ENCODE measurements at regions of chr4 and their contacts with region 1.

Region 1: GRCh38 chr4:118968005-118968404 is 79.4 kb downstream of the SYNPO2 start:
- DNase-seq: peak; percentile 43 to 74 (median 61)
- H3K4me3 ChIP-seq: no peak overlapping the region
- H3K27ac ChIP-seq: peak overlapping the region in 1 of 2 donors; percentile 65
- H3K4me1 ChIP-seq: peaks cover 29% of the 10 kb centered on the region
- H3K27me3 ChIP-seq: no peaks in the 10 kb centered on the region
- CTCF ChIP-seq: no peak
- EP300 ChIP-seq: no peak
- POLR2A ChIP-seq: no peak

Region 2: GRCh38 chr4:118740869-118741268 is 227.1 kb before region 1 on chr4:
- intact Hi-C with region 1: loop called in 3 of 4 experiments (anchors 5 to 10 kb)
- DNase-seq: no peak
- H3K4me3 ChIP-seq: no peak overlapping the region
- H3K27ac ChIP-seq: no peak overlapping the region
- H3K4me1 ChIP-seq: no peaks in the 10 kb centered on the region
- H3K27me3 ChIP-seq: no peaks in the 10 kb centered on the region
- CTCF ChIP-seq: peak in 2 of 3 donors; percentile 40 to 57
- EP300 ChIP-seq: no peak
- POLR2A ChIP-seq: no peak

Region 3: GRCh38 chr4:118772081-118772766 is 195.8 kb before region 1 on chr4:
- intact Hi-C with region 1: loop called in 3 of 4 experiments (anchors 5 kb)
- DNase-seq: no peak
- H3K4me3 ChIP-seq: no peak overlapping the region
- H3K27ac ChIP-seq: peak overlapping the region in 1 of 2 donors; percentile 53
- H3K4me1 ChIP-seq: peaks cover 8% of the 10 kb centered on the region
- H3K27me3 ChIP-seq: no peaks in the 10 kb centered on the region
- CTCF ChIP-seq: peak in 2 of 3 donors; percentile 59 to 68
- EP300 ChIP-seq: no peak
- POLR2A ChIP-seq: no peak

Region 4: DNA sequence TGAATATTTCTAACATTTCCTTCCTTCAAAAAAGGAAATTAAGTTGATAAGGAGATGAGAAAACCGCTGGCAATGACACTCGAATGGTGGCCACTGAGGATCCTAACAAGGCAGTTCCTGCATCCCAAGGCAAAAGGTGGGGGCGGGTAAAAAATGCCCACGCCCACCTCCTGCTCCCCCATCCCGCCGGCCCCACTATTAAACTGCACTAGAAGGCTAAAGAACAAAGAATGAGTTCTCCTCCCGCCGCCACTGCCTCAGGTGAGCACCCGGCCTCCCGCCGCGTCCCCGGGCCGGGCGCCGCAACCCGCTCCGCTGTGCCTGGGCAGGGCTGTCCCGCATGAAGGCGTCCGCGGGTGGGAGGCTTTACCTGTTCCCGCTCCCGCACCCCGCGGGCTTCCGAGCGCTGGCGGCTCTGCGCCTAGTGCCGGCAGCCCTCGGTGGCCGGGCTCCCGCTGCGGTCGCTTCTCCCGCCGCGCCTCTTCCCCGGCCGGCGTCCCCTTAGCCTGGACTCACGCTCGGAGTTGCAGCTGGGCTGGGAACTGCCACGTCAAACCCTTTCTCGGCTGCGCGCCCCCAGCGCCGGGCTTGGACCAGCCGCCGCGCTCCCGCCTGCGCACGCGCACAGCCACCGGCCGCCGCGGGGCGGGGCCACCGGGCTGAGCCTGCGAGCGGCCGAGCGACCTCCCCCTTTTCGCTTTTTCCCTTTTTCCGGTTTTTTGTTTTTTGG is 132.3 kb before region 1 on chr4 and contains the start of gene SEC24D:
- intact Hi-C with region 1: loop called in 1 of 4 experiments (anchors 5 kb)
- DNase-seq: peak; percentile 86 to 94 (median 92)
- H3K4me3 ChIP-seq: peak within 1 kb of the TSS; percentile 84
- H3K27ac ChIP-seq: peak within 1 kb of the TSS; percentile 88 to 90
- H3K4me1 ChIP-seq: peaks cover 1% of the 10 kb centered on the region
- H3K27me3 ChIP-seq: no peaks in the 10 kb centered on the region
- CTCF ChIP-seq: peak in 1 of 3 donors; percentile 18
- EP300 ChIP-seq: no peak
- POLR2A ChIP-seq: peak; percentile 80
- total RNA-seq, gene SEC24D: 25.2 to 53.0 (median 39.5) TPM

Region 5: GRCh38 chr4:118888666-118889311 is 79.2 kb before region 1 on chr4 and contains the start of gene SYNPO2:
- intact Hi-C with region 1: loop called (anchors 2 to 5 kb)
- DNase-seq: peak; percentile 91 to 94 (median 92)
- H3K4me3 ChIP-seq: peak within 1 kb of the TSS; percentile 66
- H3K27ac ChIP-seq: peak within 1 kb of the TSS; percentile 16 to 71
- H3K4me1 ChIP-seq: peaks cover 1% of the 10 kb centered on the region
- H3K27me3 ChIP-seq: no peaks in the 10 kb centered on the region
- CTCF ChIP-seq: no peak
- EP300 ChIP-seq: no peak
- POLR2A ChIP-seq: peak; percentile 92
- total RNA-seq, gene SYNPO2: 61.9 to 265 (median 165) TPM

Region 6: GRCh38 chr4:118898684-118899138 is 69.3 kb before region 1 on chr4:
- intact Hi-C with region 1: loop called in 2 of 4 experiments (anchors 5 kb)
- DNase-seq: peak; percentile 46 to 76 (median 62)
- H3K4me3 ChIP-seq: no peak overlapping the region
- H3K27ac ChIP-seq: peak overlapping the region; percentile 42 to 53
- H3K4me1 ChIP-seq: peaks cover 15% of the 10 kb centered on the region
- H3K27me3 ChIP-seq: no peaks in the 10 kb centered on the region
- CTCF ChIP-seq: no peak
- EP300 ChIP-seq: no peak
- POLR2A ChIP-seq: no peak

Region 7: GRCh38 chr4:119000400-119000799 is 32.4 kb after region 1 on chr4:
- intact Hi-C with region 1: no loop called
- DNase-seq: no peak
- H3K4me3 ChIP-seq: no peak overlapping the region
- H3K27ac ChIP-seq: no peak overlapping the region
- H3K4me1 ChIP-seq: peaks cover 9% of the 10 kb centered on the region
- H3K27me3 ChIP-seq: no peaks in the 10 kb centered on the region
- CTCF ChIP-seq: no peak
- EP300 ChIP-seq: no peak
- POLR2A ChIP-seq: no peak